Cardiac septum (tissue), 1 donor: ENCODE measurements at regions of chr16 and their contacts with region 1.

Region 1: DNA sequence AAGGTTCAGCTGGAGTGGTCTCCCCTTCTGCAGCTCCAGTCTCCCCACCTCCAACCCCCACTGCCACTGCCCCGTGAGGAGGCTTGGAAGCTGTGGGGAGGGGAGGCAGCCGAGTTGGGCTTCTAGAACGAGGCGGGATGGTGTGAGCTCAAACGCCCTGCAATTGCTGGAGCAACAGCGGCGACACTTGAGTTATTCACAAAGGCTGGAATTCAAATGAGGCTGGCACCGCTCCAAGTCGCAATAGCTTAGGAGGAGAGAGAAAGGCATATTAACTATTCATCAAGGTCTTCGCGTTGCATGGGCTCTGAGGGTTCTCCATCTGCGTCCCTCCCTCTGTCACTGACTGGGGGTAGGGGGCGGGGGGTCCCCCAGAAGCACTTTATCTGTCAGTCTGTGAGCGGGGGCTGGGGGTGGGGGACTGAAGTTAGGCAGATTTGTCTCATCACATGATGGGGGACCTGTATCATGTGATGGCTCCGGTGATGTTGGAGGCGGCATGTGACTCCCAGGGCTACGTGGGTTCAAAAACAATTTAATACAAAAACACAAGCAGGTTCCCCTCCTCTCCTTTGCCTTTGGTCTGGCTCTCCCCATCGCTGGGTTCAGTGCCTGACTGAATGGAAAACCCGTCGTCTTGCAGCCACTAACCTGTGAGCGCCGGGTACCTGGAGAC is 70.5 kb downstream of the RBBP6 start:
- DNase-seq: no peak

Region 2: DNA sequence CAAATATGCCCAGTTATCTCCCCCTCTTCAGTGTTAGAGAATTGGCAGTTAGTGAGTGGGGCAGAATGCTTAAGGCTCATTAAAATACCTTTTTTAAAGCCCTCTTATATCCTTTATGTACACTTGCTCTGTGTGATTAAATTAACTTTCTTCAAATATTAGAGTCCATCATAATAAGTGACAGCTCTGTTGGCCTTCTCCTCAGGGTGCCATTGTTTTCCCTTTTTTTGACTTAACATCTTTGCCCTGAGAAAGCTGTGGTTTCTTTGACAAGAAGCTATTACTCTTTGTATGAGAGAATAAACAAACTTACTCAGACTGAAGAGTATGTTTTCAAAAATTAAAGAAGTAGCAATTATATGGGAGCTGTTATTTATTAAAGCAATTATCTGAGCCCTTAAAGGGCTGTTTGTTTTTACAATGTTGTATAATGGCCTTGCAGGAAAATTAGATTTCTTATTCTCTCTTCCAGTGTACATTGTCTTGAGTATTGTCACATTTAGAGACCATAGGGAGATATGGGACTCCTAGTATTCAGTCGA is 57.1 kb before region 1 on chr16:
- intact Hi-C with region 1: no loop called
- DNase-seq: no peak

Region 3: DNA sequence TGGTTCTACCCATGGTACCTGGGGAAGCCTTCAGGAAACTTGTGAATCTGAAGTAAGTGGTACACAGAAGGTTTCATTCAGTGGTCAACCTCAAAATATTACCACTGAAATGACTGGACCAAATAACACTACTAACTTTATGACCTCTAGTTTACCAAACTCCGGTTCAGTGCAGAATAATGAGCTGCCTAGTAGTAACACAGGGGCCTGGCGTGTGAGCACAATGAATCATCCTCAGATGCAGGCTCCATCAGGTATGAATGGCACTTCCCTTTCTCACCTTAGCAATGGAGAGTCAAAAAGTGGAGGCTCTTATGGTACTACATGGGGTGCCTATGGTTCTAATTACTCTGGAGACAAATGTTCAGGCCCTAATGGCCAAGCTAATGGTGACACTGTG is 180.0 kb after region 1 on chr16:
- intact Hi-C with region 1: loop called (anchors 10 kb)
- DNase-seq: no peak